Endothelial cell of umbilical vein (primary cell): ENCODE measurements at regions of chr12 and their contacts with region 1.

Region 1: DNA sequence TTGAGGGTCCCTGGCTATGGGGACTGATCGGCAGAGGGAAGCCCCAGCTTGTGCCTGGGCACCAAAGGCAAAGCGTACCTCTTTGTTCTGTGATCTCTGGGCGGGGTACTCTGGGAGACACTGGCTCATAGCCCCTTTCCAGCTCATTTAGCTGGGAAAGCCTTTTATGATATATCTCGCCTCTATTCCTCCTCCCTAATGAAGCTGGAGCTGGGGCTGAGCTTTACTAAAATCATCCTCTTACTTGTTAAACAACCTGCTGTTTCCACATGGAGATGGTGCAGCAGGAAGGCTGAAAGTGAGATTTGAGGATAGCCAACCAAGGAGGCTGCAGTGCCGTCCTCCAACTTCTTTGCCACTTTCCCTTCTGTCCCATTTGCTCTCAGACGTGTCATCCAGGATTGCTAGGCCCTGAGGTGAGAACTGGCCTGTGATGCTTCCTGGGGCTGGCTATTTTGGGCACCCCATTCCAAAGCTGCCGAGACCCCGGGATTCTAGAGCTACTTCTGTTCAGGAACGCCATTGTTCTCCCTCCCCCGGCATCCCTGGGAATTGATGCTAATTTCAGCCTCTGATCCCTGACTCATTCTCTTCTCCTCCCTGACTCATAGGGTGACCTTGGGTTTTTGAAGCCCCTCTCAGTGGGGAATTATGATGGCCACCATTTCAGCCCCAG is 16.0 kb downstream of the PDE1B start:
- DNase-seq: no peak
- H3K4me3 ChIP-seq: no peak overlapping the region
- H3K27ac ChIP-seq: no peak overlapping the region
- H3K4me1 ChIP-seq: no peaks in the 10 kb centered on the region
- H3K27me3 ChIP-seq: peaks cover 25 to 26% of the 10 kb centered on the region in 2 experiments
- CTCF ChIP-seq: no peak
- POLR2A ChIP-seq: no peak

Region 2: GRCh38 chr12:53659011-53659551 is 906.4 kb before region 1 on chr12:
- CTCF ChIA-PET with region 1: no interaction called
- POLR2A ChIA-PET with region 1: no interaction called
- dilution Hi-C with region 1: no loop called
- intact Hi-C with region 1: no loop called
- DNase-seq: peak; percentile 90
- H3K4me3 ChIP-seq: no peak overlapping the region
- H3K27ac ChIP-seq: peak overlapping the region; percentile 76
- H3K4me1 ChIP-seq: peaks cover 14% of the 10 kb centered on the region
- H3K27me3 ChIP-seq: no peaks in the 10 kb centered on the region
- CTCF ChIP-seq: no peak
- POLR2A ChIP-seq: no peak

Region 3: DNA sequence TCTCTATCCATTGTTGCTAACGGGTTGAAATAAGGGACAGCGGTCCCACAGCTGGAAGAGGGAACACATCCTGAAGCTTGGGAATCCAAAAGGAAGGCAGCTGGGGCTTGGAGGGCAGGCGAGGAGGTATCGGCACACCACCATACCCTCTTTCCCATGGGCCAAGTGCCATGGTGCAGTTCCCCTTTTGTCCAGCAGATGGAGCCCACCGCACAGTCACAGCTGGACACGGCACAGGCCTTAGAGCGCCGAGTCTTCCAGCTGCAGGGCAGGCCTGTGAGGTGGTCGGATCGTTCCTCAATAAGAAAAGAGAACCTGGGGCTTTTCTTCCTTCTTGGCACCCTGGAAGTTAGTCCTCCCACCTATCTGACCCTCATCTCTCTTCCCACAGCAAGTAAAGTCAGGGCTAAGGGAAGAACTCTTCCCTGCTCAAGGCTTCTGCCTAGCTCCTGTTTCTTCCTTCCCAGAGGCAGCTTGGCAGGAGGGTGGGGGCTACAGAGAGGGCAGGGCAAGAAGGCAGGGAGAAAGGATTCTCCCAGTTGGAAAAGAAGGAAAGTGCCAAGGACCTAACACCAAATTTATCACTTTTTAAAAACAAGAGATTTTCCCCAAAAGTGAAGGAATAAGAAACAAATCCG is 14.4 kb after region 1 on chr12:
- CTCF ChIA-PET with region 1: interaction called, 30 read pairs
- POLR2A ChIA-PET with region 1: no interaction called
- dilution Hi-C with region 1: no loop called
- intact Hi-C with region 1: no loop called
- DNase-seq: peak; percentile 68
- H3K4me3 ChIP-seq: no peak overlapping the region
- H3K27ac ChIP-seq: no peak overlapping the region
- H3K4me1 ChIP-seq: no peaks in the 10 kb centered on the region
- H3K27me3 ChIP-seq: peaks cover 2 to 8% of the 10 kb centered on the region in 2 experiments
- CTCF ChIP-seq: peak; percentile 95 to 99
- POLR2A ChIP-seq: no peak